ENCODE measurements at regions of chr15 and their contacts with region 1.

Region 1: DNA sequence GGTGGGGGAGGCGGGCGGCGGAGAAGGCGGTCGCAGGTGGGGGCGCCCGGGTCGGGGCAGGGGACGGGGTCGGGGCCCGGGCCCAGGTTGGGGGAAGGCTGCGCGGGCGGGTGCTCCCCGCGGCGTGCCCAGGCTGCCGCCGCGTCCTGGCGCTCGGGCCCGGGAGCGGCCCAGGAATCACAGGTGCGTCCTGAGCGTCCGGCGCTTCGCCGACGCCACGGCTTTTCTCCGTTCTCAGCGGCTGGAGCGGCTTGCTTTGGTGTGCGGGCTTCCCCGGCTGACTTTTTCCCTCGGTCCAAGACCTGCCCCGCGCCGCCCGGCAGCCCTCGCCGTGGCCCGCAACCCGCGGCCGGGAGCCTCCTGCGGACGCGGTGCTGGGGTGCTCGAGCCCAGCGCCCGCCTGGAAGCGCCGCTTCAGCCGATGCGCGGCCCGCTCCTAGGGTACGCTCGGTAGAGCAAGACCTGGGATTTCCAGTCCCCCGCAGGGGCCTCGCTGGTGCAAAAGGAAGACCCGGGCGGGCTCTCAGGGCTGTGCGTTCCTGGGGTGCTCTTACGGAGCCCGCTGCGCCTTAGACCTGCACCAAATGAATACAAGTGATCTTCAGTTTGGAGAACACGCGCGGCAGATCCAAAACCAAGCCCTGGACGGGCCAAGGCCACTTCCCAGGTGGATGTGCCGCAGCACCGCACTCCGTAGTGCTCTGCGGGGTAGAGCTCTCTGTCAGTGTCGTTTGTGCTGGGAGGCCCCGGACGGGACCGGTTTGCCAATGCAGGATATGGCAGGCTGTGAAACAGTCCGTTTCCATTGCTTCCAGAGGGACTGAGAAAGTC is 639 bp downstream of the NIPA1 start:
- DNase-seq: peak; percentile 28
- H3K4me3 Mint-ChIP-seq: peak overlapping the region; percentile 84
- H3K27ac Mint-ChIP-seq: no peak overlapping the region
- H3K4me1 Mint-ChIP-seq: no peaks in the 10 kb centered on the region
- H3K27me3 Mint-ChIP-seq: no peaks in the 10 kb centered on the region
- CTCF ChIP-seq: no peak

Region 2: GRCh38 chr15:22838292-22839042 is 51.4 kb after region 1 on chr15 and contains the start of gene NIPA2:
- CTCF ChIA-PET with region 1: no interaction called
- POLR2A ChIA-PET with region 1: interaction called, 15 read pairs
- intact Hi-C with region 1: loop called (anchors 5 kb)
- DNase-seq: peak; percentile 98
- H3K4me3 Mint-ChIP-seq: peak within 1 kb of the TSS; percentile 81
- H3K27ac Mint-ChIP-seq: peak within 1 kb of the TSS; percentile 96
- H3K4me1 Mint-ChIP-seq: peaks cover 18% of the 10 kb centered on the region
- H3K27me3 Mint-ChIP-seq: no peaks in the 10 kb centered on the region
- CTCF ChIP-seq: no peak
- total RNA-seq, gene NIPA2: 50.4 and 51.9 TPM in 2 replicates

Measured in MCF 10A (cell line).